Caco-2 (cell line): ENCODE measurements at regions of chr1 and their contacts with region 1.

Region 1: GRCh38 chr1:209893751-209894150 is 44.3 kb upstream of the SYT14 start:
- DNase-seq: no peak
- H3K4me3 ChIP-seq: no peak overlapping the region
- H3K4me3 Mint-ChIP-seq: no peak overlapping the region
- H3K27ac Mint-ChIP-seq: no peak overlapping the region
- H3K4me1 ChIP-seq: no peaks in the 10 kb centered on the region
- H3K4me1 Mint-ChIP-seq: no peaks in the 10 kb centered on the region
- H3K27me3 ChIP-seq: no peaks in the 10 kb centered on the region
- H3K27me3 Mint-ChIP-seq: no peaks in the 10 kb centered on the region
- CTCF ChIP-seq: no peak

Region 2: GRCh38 chr1:209875515-209875914 is 18.2 kb before region 1 on chr1:
- CTCF ChIA-PET with region 1: no interaction called
- POLR2A ChIA-PET with region 1: no interaction called
- intact Hi-C with region 1: loop called (anchors 1 kb)
- DNase-seq: peak in 1 of 2 experiments; percentile 24
- H3K4me3 ChIP-seq: no peak overlapping the region
- H3K4me3 Mint-ChIP-seq: no peak overlapping the region
- H3K27ac Mint-ChIP-seq: no peak overlapping the region
- H3K4me1 ChIP-seq: no peaks in the 10 kb centered on the region; the same call in 1 of the 2 replicates
- H3K4me1 Mint-ChIP-seq: peaks cover 8% of the 10 kb centered on the region
- H3K27me3 ChIP-seq: no peaks in the 10 kb centered on the region
- H3K27me3 Mint-ChIP-seq: peaks cover 4% of the 10 kb centered on the region
- CTCF ChIP-seq: peak in 1 of 2 experiments; percentile 24